ENCODE measurements at regions of chr4 and their contacts with region 1.

Region 1: DNA sequence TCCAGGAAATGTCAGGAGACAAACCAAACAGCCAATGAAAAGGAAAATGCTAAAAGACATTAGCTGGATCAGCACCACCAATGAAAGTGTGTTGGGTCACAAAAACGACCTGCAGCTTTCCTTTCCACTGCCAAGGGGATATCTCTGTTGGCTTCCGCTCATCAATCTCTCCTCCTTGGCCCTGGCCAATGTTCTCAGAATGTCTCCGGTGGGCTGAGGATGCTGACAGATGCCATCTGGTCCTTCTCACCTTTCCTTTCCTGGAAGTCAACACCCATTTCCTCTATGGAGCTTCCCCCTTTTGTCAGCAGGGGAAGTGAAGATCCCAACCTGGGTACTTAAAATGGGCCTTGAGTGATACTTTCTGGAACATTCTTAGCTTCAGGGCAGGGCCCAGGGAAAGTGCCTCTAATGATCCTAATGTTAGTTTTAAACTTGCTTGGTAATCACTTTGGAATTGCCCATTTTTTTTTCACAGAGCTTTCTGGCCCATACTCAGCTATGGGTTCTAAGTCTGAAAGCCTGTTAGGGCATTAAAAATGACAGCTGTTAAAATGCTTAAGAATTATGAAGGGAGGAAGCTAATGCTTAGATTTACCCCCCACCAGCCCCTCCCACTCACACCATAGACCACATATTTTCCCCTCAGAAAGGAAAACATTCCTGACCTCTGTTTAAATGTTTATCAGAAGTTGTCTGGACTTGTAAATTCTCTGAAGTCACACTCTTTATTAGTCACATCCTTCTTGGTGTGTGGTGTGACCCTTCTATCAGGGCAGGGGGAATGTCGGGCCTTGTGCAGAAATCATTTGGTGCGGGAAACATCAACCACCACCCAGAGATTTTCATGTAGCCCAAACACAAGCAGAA is 29.2 kb downstream of the IGFBP7 start:
- DNase-seq: peak in 1 of 2 donors; percentile 90
- H3K4me3 ChIP-seq: peak overlapping the region in 1 of 2 donors; percentile 3
- H3K27ac ChIP-seq: peak overlapping the region; percentile 95 to 96
- H3K4me1 ChIP-seq: peaks cover 19 to 68% of the 10 kb centered on the region in 2 donors
- H3K27me3 ChIP-seq: no peaks in the 10 kb centered on the region
- CTCF ChIP-seq: no peak

Region 2: GRCh38 chr4:55948726-55949474 is 1132.1 kb before region 1 on chr4 and contains the start of gene CEP135:
- intact Hi-C with region 1: no loop called
- DNase-seq: peak; percentile 72 to 95
- H3K4me3 ChIP-seq: peak within 1 kb of the TSS; percentile 61 to 98
- H3K27ac ChIP-seq: peak within 1 kb of the TSS; percentile 90 to 93
- H3K4me1 ChIP-seq: peaks cover 0 to 15% of the 10 kb centered on the region in 2 donors
- H3K27me3 ChIP-seq: no peaks in the 10 kb centered on the region
- CTCF ChIP-seq: peak; percentile 88 to 94 (median 93)
- total RNA-seq, gene CEP135: 0.53 TPM

Region 3: DNA sequence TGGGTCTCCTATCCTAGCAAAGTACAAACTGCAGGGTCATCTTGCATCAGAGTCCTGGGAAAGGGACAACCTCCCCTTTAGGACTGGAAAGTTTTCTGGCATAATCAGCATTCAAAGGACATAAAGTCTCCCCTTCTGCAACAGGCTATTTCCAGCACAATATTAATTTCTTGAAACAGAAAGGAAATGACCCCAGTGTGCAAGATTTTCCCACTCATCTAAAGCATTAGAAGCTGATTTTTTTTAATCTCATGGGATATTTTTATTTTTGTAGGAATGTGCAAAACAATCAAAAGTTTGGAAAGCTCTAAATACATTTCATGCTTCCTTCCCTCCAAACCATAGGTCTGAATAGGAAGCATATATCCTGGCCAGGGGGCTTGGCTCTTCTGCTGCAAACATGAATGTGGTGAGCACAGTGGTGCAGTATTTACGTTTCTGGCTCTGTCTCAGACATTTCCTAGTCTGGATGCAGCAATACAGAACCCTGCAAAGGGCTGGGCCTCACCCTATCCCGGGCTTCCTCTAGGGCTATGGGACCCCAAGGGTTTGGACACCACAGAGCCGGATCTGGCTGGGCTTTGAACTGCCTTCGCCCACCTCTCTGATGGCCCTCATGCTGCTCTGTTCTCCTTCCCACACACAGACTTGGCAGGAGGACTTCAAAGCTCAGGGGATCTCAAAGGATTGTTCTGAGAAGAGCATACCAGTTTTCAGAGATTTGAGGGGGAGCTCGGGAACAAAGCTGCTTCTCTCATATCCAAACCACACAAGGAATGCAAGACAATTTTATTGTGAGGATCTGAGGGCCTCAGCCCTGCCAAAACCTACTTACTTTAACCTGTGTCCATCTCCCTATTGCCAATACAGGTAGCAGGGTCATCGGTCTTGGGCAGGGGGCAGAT is 37.4 kb before region 1 on chr4:
- intact Hi-C with region 1: loop called (anchors 2 kb)
- DNase-seq: no peak
- H3K4me3 ChIP-seq: peak overlapping the region in 1 of 2 donors; percentile 38
- H3K27ac ChIP-seq: peak overlapping the region; percentile 85
- H3K4me1 ChIP-seq: peaks cover 5 to 71% of the 10 kb centered on the region in 2 donors
- H3K27me3 ChIP-seq: no peaks in the 10 kb centered on the region
- CTCF ChIP-seq: no peak

Region 4: DNA sequence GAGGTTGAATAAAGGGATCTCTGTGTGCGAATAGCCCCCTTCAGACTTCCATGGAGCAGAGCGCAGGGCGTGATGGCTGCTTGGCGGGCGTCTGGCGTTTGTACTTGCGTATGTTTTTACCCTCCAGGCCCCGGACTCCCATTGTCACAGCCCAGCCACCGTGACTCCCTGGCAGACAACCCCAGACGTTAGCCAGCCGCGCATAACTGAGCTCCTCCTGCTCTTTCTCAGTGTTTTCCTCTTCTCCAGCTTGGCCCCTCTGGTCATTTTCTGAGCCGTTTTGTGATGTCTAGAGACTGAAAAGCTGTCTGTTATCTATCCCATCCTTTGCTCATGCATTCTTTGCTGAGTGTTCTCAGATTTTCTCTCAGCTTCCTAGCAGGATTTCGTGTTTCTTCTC is 25.1 kb before region 1 on chr4:
- intact Hi-C with region 1: no loop called
- DNase-seq: no peak
- H3K4me3 ChIP-seq: peak overlapping the region in 1 of 2 donors; percentile 53
- H3K27ac ChIP-seq: peak overlapping the region; percentile 85
- H3K4me1 ChIP-seq: peaks cover 32 to 58% of the 10 kb centered on the region in 2 donors
- H3K27me3 ChIP-seq: no peaks in the 10 kb centered on the region
- CTCF ChIP-seq: no peak

Region 5: GRCh38 chr4:57094832-57095223 is 13.8 kb after region 1 on chr4:
- intact Hi-C with region 1: loop called (anchors 2 kb)
- DNase-seq: no peak
- H3K4me3 ChIP-seq: peak overlapping the region in 1 of 2 donors; percentile 0
- H3K27ac ChIP-seq: peak overlapping the region; percentile 75 to 95
- H3K4me1 ChIP-seq: peaks cover 20 to 81% of the 10 kb centered on the region in 2 donors
- H3K27me3 ChIP-seq: no peaks in the 10 kb centered on the region
- CTCF ChIP-seq: peak; percentile 24 to 37 (median 37)

Measured in ascending aorta (tissue), 2 donors.